ENCODE measurements at regions of chr9 and their contacts with region 1.

Region 1: DNA sequence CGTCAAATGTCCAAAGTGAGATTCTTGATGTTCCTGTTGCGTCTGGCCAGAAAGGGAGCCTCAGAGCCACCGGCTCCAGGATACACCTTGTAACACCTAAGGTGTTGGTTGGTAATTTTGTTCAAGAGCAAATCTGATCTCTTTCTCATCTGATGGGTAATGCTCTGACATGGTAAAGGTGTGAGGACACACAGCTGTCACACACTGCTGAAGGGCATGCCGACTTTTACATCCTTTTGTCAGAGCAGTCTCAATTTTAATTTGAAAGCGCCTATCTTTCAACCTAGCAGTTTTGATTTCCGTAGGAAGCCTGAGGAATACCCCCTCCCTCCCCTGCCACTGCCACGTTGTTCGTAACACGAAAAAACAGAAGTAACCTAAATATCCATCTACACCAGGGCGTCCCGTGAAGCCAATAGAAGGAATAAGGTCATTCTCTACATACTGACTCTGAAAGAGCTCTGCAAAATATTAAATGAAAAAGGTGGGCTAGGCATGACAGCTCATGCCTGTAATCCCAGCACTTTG is 57.4 kb downstream of the TSTD2 start:
- DNase-seq: no peak
- H3K4me3 Mint-ChIP-seq: no peak overlapping the region
- H3K27ac Mint-ChIP-seq: no peak overlapping the region
- H3K4me1 Mint-ChIP-seq: no peaks in the 10 kb centered on the region
- H3K27me3 Mint-ChIP-seq: peaks cover 15% of the 10 kb centered on the region
- CTCF ChIP-seq: no peak

Region 2: GRCh38 chr9:97564291-97565175 is 11.2 kb before region 1 on chr9:
- CTCF ChIA-PET with region 1: interaction called, 12 read pairs
- intact Hi-C with region 1: no loop called
- DNase-seq: no peak
- H3K4me3 Mint-ChIP-seq: no peak overlapping the region
- H3K27ac Mint-ChIP-seq: no peak overlapping the region
- H3K4me1 Mint-ChIP-seq: no peaks in the 10 kb centered on the region
- H3K27me3 Mint-ChIP-seq: peaks cover 37% of the 10 kb centered on the region
- CTCF ChIP-seq: no peak

Region 3: GRCh38 chr9:98848450-98849149 is 1272.9 kb after region 1 on chr9:
- CTCF ChIA-PET with region 1: no interaction called
- intact Hi-C with region 1: no loop called
- DNase-seq: peak; percentile 90
- H3K4me3 Mint-ChIP-seq: no peak overlapping the region
- H3K27ac Mint-ChIP-seq: peak overlapping the region; percentile 77
- H3K4me1 Mint-ChIP-seq: peaks cover 10% of the 10 kb centered on the region
- H3K27me3 Mint-ChIP-seq: no peaks in the 10 kb centered on the region
- CTCF ChIP-seq: peak; percentile 56